ENCODE measurements at regions of chr20 and their contacts with region 1.

Region 1: DNA sequence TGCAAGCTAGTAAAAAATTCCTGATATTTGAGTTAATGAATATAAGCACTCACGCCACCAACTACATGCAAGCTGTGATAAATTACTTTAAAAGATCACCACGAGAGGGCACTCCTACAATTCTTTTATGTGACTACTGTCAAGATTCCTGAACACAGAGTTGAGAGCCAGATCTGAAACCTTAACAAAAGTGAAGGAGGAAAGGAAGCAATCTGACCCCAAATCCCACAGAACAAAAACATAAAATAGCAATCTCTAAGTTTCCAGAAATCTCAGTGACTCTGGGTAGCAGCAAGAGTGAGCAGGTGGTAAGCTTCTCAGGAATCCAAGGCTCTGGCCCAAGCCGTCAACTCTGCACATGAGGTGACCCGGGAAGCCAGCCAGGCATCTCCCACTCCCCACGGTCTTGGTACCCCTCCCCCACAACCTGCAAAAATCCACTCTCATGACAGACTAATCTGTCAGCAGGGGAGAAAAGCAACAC is 55.1 kb downstream of the STAU1 start:
- DNase-seq: peak; percentile 59

Region 2: GRCh38 chr20:49186535-49187329 is 53.7 kb after region 1 on chr20:
- in situ Hi-C with region 1: loop called (anchors 10 kb)
- DNase-seq: peak; percentile 61

Measured in Caki2 (cell line).